H1 (cell line): ENCODE measurements at regions of chr4 and their contacts with region 1.

Region 1: DNA sequence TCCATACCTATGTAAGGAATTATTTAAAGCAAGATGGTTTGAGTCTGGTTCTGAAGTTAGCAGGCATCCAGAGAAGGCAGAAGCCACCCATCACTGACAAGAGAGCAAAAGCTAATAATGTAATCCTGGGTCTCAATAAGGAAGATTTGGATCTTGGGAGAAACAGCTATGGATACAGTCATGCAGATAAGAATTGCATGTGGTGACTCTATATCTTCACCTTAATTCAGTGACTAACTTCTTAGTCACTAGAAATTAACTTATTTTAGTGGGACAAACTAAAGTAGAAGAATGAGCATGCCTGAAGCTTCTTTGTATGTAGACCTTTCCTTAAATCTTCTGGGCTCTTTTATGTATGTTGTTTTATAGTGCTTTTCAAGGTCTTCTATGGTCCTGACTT is 66.6 kb downstream of the ATP10D start:
- DNase-seq: no peak
- H3K4me3 ChIP-seq: no peak overlapping the region
- H3K27ac ChIP-seq: no peak overlapping the region
- H3K4me1 ChIP-seq: no peaks in the 10 kb centered on the region
- H3K27me3 ChIP-seq: no peaks in the 10 kb centered on the region
- CTCF ChIP-seq: no peak
- EP300 ChIP-seq: no peak
- POLR2A ChIP-seq: no peak
- RAD21 ChIP-seq: no peak

Region 2: DNA sequence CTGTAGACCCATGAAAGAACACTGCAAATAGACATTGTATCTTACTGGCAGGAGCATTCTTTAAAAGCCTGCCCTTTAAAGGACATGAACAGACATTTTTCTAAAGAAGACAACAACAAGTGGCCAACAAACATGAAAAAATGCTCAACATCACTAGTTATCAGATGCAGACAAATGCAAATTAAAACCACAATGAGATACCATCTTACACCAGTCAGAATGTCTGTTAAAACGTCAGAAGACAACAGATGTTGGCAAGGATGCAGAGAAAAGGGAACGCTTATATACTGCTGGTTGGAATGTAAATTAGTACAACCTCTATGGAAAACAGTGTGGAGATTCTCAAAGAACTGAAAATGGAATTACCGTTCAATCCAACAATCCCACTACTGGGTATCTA is 10.6 kb after region 1 on chr4:
- CTCF ChIA-PET with region 1: interaction called, 11 read pairs
- POLR2A ChIA-PET with region 1: no interaction called
- DNase-seq: no peak
- H3K4me3 ChIP-seq: no peak overlapping the region
- H3K27ac ChIP-seq: no peak overlapping the region
- H3K4me1 ChIP-seq: peaks cover 0 to 2% (median 0%) of the 10 kb centered on the region in 4 experiments; a peak in 1 of 7 replicates
- H3K27me3 ChIP-seq: no peaks in the 10 kb centered on the region
- CTCF ChIP-seq: no peak
- EP300 ChIP-seq: no peak
- POLR2A ChIP-seq: no peak
- RAD21 ChIP-seq: no peak